IMR-90 (cell line): ENCODE measurements at regions of chr16 and their contacts with region 1.

Region 1: GRCh38 chr16:47141773-47142485 is 1.8 kb downstream of the NETO2 start:
- DNase-seq: peak; percentile 83
- ATAC-seq: peak; percentile 59
- H3K4me3 ChIP-seq: peak overlapping the region; percentile 62
- H3K27ac ChIP-seq: no peak overlapping the region
- H3K4me1 ChIP-seq: no peaks in the 10 kb centered on the region
- H3K27me3 ChIP-seq: no peaks in the 10 kb centered on the region
- CTCF ChIP-seq: peak; percentile 95
- POLR2A ChIP-seq: 0 out of 2 replicates have a peak, but pooled peaks have one; percentile 33
- RAD21 ChIP-seq: peak; percentile 94

Region 2: DNA sequence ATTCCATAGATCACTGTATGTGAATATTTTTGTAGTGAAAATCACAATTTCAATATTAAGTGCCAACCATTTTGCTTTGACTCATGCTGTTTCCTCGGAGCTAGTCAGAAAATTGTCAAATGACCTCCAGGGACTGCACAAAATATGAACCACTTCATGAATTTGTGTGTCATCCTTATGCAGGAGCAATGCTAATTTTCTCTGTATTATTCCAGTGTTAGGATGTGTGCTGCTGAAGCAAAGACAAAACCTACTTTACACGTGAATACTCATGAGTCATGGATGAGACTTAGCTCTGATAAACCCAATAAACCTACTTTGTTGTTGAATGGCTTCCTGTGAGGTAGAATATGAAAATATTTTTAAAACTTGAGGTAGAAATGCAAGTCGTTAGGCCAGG is 586.0 kb before region 1 on chr16:
- CTCF ChIA-PET with region 1: no interaction called
- POLR2A ChIA-PET with region 1: no interaction called
- dilution Hi-C with region 1: no loop called
- in situ Hi-C with region 1: no loop called
- intact Hi-C with region 1: no loop called
- DNase-seq: peak; percentile 54
- ATAC-seq: peak; percentile 16; the same call in 1 of the 2 replicates
- H3K4me3 ChIP-seq: no peak overlapping the region
- H3K27ac ChIP-seq: no peak overlapping the region
- H3K4me1 ChIP-seq: no peaks in the 10 kb centered on the region
- H3K27me3 ChIP-seq: no peaks in the 10 kb centered on the region
- CTCF ChIP-seq: no peak
- POLR2A ChIP-seq: no peak
- RAD21 ChIP-seq: no peak

Region 3: DNA sequence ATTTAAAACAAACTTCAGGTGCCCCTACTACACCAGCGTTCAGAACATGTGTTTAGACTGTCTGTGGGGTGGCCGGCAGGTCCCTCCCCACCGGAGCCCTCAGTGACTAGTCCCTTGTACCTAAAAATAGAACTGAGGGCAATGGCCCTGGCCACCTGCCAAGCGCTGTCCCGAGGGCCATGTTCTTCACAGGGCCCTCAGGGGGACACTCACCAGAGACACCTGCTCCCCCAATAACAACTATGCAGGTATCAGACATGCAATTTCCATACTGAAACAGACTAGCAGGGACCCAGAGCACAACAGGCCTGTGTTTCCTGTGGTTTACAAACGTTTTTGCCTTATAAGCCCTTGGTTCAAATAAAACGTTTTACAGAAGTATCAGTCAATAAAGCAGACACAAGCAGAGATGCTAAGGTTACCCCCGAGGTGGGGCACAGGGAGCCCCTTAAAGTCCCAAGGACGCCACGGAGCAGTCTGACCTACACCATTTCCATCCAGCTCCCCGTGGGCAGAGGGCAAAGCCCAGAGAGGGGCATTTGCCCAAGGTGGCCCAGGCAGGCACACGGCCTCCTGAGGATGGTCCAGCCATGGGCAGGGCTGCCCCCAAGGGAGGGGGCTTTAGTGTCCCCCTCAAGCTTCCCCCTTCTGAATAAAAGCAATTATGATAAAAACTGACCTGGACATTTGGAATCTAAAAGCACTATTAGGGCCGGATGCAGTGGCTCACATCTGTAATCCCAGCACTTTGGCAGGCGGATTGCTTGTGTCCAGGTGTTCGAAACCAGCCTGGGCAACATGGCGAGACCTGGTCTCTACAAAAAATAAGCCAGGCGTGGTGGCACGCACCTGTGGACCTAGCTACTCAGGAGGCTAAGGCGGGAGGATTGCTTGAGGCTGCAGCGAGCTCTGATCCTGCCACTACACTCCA is 392.9 kb before region 1 on chr16:
- CTCF ChIA-PET with region 1: no interaction called
- POLR2A ChIA-PET with region 1: no interaction called
- dilution Hi-C with region 1: no loop called
- in situ Hi-C with region 1: no loop called
- intact Hi-C with region 1: no loop called
- DNase-seq: no peak
- ATAC-seq: no peak
- H3K4me3 ChIP-seq: no peak overlapping the region
- H3K27ac ChIP-seq: no peak overlapping the region
- H3K4me1 ChIP-seq: peaks cover 16% of the 10 kb centered on the region
- H3K27me3 ChIP-seq: no peaks in the 10 kb centered on the region
- CTCF ChIP-seq: no peak
- POLR2A ChIP-seq: no peak
- RAD21 ChIP-seq: no peak

Region 4: DNA sequence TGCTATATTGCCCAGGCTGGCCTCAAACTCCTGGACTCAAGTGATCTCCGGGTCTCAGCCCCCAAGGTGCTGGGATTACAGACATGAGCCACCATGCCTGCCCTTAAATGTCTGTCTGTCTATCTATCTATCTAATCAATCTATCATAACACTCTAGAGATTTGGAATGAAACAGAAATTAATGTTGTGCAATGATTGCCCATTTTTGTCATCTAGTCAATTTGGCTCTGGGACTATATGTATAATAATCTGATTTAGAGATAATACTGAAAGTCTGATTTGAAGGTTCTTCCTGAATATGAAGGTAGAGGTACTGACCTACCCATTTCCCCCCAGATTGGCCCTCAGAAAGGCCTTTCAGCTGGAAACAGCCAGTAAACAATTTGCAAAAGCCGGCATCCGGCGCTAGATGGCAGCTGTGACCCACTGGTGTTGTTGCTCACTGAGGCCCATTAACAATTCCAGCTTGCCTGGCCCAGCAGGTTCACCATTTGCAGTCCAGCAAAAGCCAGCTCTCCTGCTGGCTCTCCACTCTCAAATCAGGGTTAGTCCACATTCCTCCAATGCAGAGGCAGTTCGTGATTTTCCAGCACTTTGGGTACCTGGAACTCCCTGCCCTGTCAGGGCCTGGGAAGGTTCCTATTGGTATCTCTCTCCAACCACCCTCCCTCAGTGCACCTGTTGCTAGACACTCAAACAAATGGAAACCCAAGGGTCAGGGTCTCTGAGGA is 288.1 kb before region 1 on chr16:
- CTCF ChIA-PET with region 1: no interaction called
- POLR2A ChIA-PET with region 1: no interaction called
- dilution Hi-C with region 1: no loop called
- in situ Hi-C with region 1: no loop called
- intact Hi-C with region 1: loop called (anchors 10 kb)
- DNase-seq: peak; percentile 69
- ATAC-seq: peak; percentile 93
- H3K4me3 ChIP-seq: no peak overlapping the region
- H3K27ac ChIP-seq: no peak overlapping the region
- H3K4me1 ChIP-seq: no peaks in the 10 kb centered on the region
- H3K27me3 ChIP-seq: peaks cover 2% of the 10 kb centered on the region; the same call in 1 of the 2 replicates
- CTCF ChIP-seq: peak; percentile 97
- POLR2A ChIP-seq: no peak
- RAD21 ChIP-seq: peak; percentile 98

Region 5: GRCh38 chr16:47096297-47096696 is 45.6 kb before region 1 on chr16:
- CTCF ChIA-PET with region 1: no interaction called
- POLR2A ChIA-PET with region 1: no interaction called
- dilution Hi-C with region 1: no loop called
- in situ Hi-C with region 1: no loop called
- intact Hi-C with region 1: no loop called
- DNase-seq: no peak
- ATAC-seq: no peak
- H3K4me3 ChIP-seq: no peak overlapping the region
- H3K27ac ChIP-seq: no peak overlapping the region
- H3K4me1 ChIP-seq: no peaks in the 10 kb centered on the region
- H3K27me3 ChIP-seq: no peaks in the 10 kb centered on the region
- CTCF ChIP-seq: no peak
- POLR2A ChIP-seq: no peak
- RAD21 ChIP-seq: no peak

Region 6: GRCh38 chr16:47311738-47312505 is 170.0 kb after region 1 on chr16:
- CTCF ChIA-PET with region 1: interaction called, 5 read pairs
- POLR2A ChIA-PET with region 1: no interaction called
- dilution Hi-C with region 1: no loop called
- in situ Hi-C with region 1: no loop called
- intact Hi-C with region 1: loop called (anchors 5 kb)
- DNase-seq: peak; percentile 57
- ATAC-seq: no peak
- H3K4me3 ChIP-seq: no peak overlapping the region
- H3K27ac ChIP-seq: no peak overlapping the region
- H3K4me1 ChIP-seq: peaks cover 4% of the 10 kb centered on the region; the same call in 1 of the 2 replicates
- H3K27me3 ChIP-seq: no peaks in the 10 kb centered on the region
- CTCF ChIP-seq: no peak
- POLR2A ChIP-seq: no peak
- RAD21 ChIP-seq: no peak

Region 7: DNA sequence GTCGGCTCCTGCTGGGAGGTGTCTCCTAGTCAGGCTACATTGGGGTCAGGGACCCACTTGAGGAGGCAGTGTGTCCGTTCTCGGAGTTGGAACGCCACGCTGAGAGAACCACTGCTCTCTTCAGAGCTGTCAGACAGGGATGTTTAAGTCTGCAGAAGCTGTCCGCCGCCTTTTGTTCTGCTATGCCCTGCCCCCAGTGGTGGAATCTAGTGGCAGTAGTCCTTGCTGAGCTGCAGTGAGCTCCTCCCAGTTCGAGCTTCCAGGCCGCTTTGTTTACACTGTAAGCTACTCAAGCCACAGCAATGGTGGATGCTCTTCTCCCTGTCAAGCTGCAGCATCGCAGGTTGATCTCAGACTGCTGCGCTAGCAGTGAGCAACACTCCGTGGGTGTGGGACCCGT is 282.9 kb after region 1 on chr16:
- CTCF ChIA-PET with region 1: no interaction called
- POLR2A ChIA-PET with region 1: no interaction called
- dilution Hi-C with region 1: no loop called
- in situ Hi-C with region 1: no loop called
- intact Hi-C with region 1: no loop called
- DNase-seq: no peak
- ATAC-seq: no peak
- H3K4me3 ChIP-seq: no peak overlapping the region
- H3K27ac ChIP-seq: no peak overlapping the region
- H3K4me1 ChIP-seq: no peaks in the 10 kb centered on the region
- H3K27me3 ChIP-seq: no peaks in the 10 kb centered on the region
- CTCF ChIP-seq: no peak
- POLR2A ChIP-seq: no peak
- RAD21 ChIP-seq: no peak

Region 8: DNA sequence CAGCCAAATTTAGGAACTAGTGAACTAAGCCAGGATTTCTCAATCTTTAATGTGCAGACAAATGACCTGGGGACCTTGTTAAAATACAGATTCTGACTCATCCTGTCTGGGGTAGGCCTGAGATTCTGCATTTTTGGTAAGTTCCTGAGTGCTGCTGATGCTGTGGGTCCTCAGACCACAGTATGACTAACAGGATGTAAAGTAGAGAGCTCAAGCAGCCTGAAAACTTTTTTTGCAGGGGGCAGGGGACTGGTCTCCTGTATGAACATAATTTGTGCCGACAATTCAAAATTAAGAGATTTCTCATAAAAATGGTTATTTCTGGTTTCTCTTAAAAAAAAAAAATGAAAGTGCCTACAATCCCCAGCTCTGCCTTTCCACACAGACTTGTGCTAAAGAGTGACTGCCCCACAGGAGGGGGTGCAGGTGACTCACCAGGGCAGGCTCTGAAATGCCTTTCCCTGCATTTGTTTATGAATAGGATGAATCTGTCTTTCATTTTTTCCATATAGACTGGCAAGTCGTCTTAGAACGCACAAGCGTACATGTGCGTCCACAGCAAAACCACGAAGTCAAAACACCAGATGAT is 590.7 kb after region 1 on chr16:
- CTCF ChIA-PET with region 1: interaction called, 5 read pairs
- POLR2A ChIA-PET with region 1: no interaction called
- dilution Hi-C with region 1: no loop called
- in situ Hi-C with region 1: no loop called
- intact Hi-C with region 1: loop called (anchors 5 kb)
- DNase-seq: peak; percentile 99
- ATAC-seq: peak; percentile 66
- H3K4me3 ChIP-seq: no peak overlapping the region
- H3K27ac ChIP-seq: peak overlapping the region; percentile 76; the same call in 1 of the 2 replicates
- H3K4me1 ChIP-seq: peaks cover 12% of the 10 kb centered on the region
- H3K27me3 ChIP-seq: no peaks in the 10 kb centered on the region
- CTCF ChIP-seq: no peak
- POLR2A ChIP-seq: no peak
- RAD21 ChIP-seq: no peak

Region 9: GRCh38 chr16:48123104-48123788 is 981.3 kb after region 1 on chr16:
- CTCF ChIA-PET with region 1: interaction called, 3 read pairs
- POLR2A ChIA-PET with region 1: no interaction called
- dilution Hi-C with region 1: no loop called
- in situ Hi-C with region 1: no loop called
- intact Hi-C with region 1: loop called (anchors 2 kb)
- DNase-seq: peak; percentile 100
- ATAC-seq: peak; percentile 78
- H3K4me3 ChIP-seq: no peak overlapping the region
- H3K27ac ChIP-seq: peak overlapping the region; percentile 93
- H3K4me1 ChIP-seq: peaks cover 27% of the 10 kb centered on the region
- H3K27me3 ChIP-seq: no peaks in the 10 kb centered on the region
- CTCF ChIP-seq: no peak
- POLR2A ChIP-seq: peak; percentile 57
- RAD21 ChIP-seq: peak; percentile 12; the same call in 1 of the 2 replicates

Region 10: DNA sequence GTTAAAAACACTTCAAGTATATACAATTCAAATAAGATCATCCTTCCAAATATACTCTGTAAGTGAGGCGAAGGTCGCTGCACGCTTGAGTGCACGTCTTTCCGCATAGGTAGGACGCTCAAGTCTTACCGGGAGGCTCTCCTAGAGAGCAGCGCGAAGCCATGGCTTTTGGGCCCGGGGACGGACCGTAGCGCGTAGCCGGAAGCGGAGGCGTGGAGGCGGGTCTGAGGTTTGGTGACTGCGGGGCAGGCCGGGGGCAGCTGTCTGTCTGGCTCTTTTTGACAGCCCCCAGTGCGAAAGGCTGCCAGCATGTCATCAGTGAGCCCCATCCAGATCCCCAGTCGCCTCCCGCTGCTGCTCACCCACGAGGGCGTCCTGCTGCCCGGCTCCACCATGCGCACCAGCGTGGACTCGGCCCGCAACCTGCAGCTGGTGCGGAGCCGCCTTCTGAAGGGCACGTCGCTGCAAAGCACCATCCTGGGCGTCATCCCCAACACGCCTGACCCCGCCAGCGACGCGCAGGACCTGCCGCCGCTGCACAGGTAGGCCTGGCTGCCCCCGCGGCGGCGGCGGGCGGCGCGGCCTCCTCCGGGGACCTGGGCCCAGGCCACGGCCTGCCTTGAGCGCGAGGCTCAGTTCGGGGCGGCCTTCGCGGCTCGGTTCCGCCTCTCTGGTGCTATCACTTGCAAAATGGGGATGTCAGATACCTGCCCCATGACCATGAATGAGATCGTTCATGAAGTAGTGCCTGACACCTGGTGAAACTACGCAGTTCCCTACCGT is 1102.3 kb after region 1 on chr16 and contains the start of gene LONP2:
- CTCF ChIA-PET with region 1: no interaction called
- POLR2A ChIA-PET with region 1: interaction called, 11 read pairs
- dilution Hi-C with region 1: no loop called
- in situ Hi-C with region 1: no loop called
- intact Hi-C with region 1: loop called (anchors 10 kb)
- DNase-seq: peak; percentile 85
- ATAC-seq: peak; percentile 99
- H3K4me3 ChIP-seq: peak within 1 kb of the TSS; percentile 93
- H3K27ac ChIP-seq: peak within 1 kb of the TSS; percentile 96
- H3K4me1 ChIP-seq: peaks cover 5% of the 10 kb centered on the region
- H3K27me3 ChIP-seq: no peaks in the 10 kb centered on the region
- CTCF ChIP-seq: no peak
- POLR2A ChIP-seq: peak; percentile 56; the same call in 1 of the 2 replicates
- RAD21 ChIP-seq: no peak
- total RNA-seq, gene LONP2: 81.1 and 90.9 TPM in 2 replicates